ENCODE measurements at regions of chr3 and their contacts with region 1.

Region 1: GRCh38 chr3:9792405-9793160 is at the starts of genes ARPC4 and TADA3:
- DNase-seq: peak; percentile 90
- ATAC-seq: peak; percentile 93
- H3K4me3 ChIP-seq: peak within 1 kb of the TSS; percentile 72 to 93 (median 93)
- H3K27ac ChIP-seq: peak within 1 kb of the TSS; percentile 97
- H3K4me1 ChIP-seq: peaks cover 28% of the 10 kb centered on the region
- H3K27me3 ChIP-seq: peaks cover 0 to 5% of the 10 kb centered on the region in 2 experiments; a peak in 1 of 5 replicates
- CTCF ChIP-seq: no peak
- EP300 ChIP-seq: no peak
- POLR2A ChIP-seq: peak; percentile 52
- RAD21 ChIP-seq: peak; percentile 30; the same call in 1 of the 2 replicates
- total RNA-seq, gene ARPC4: 73.9 and 83.6 TPM in 2 replicates
- total RNA-seq, gene TADA3: 37.1 and 43.3 TPM in 2 replicates

Region 2: DNA sequence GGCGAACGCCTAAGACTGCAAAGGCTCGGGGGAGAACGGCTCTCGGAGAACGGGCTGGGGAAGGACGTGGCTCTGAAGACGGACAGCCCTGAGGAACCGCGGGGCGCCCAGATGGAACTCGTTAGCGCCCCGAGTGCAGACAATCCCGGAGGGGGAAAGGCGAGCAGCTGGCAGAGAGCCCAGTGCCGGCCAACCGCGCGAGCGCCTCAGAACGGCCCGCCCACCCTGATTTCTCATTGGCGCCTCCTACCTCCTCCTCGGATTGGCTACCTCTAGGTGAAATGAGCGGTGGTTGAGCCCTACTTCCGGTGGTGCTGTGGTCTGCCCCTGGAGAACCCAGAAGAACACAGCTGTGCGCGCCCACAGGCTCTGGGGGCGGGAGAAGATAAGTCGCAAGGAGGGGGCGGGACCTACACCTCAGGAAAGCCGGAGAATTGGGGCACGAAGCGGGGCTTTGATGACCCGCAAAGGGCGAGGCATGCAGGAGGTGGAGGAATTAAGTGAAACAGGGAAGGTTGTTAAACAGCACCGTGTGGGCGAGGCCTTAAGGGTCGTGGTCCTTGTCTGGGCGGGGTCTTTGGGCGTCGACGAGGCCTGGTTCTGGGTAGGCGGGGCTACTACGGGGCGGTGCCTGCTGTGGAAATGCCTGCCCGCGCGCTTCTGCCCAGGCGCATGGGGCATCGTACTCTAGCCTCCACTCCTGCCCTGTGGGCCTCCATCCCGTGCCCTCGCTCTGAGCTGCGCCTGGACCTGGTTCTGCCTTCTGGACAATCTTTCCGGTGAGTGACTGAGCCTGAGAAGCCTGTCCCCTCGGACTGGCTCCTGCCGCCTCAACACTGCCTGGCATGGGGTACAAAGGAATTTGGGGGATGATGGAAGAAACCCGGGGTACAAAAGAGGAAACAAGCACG is 42.7 kb before region 1 on chr3 and contains the start of gene OGG1:
- CTCF ChIA-PET with region 1: no interaction called
- POLR2A ChIA-PET with region 1: interaction called, 30 read pairs
- in situ Hi-C with region 1: no loop called
- intact Hi-C with region 1: no loop called
- DNase-seq: peak; percentile 96
- ATAC-seq: peak; percentile 95
- H3K4me3 ChIP-seq: peak within 1 kb of the TSS; percentile 83 to 93 (median 89)
- H3K27ac ChIP-seq: peak within 1 kb of the TSS; percentile 72
- H3K4me1 ChIP-seq: peaks cover 19% of the 10 kb centered on the region
- H3K27me3 ChIP-seq: no peaks in the 10 kb centered on the region
- CTCF ChIP-seq: peak; percentile 33
- EP300 ChIP-seq: peak in 1 of 2 experiments; percentile 6; a peak in 2 of 4 replicates
- POLR2A ChIP-seq: peak; percentile 62 to 73
- RAD21 ChIP-seq: no peak
- total RNA-seq, gene OGG1: 23.8 and 28.7 TPM in 2 replicates

Region 3: GRCh38 chr3:9808345-9809037 is 15.9 kb after region 1 on chr3:
- CTCF ChIA-PET with region 1: no interaction called
- POLR2A ChIA-PET with region 1: interaction called, 13 read pairs
- in situ Hi-C with region 1: no loop called
- intact Hi-C with region 1: no loop called
- DNase-seq: peak; percentile 31
- ATAC-seq: peak; percentile 88
- H3K4me3 ChIP-seq: no peak overlapping the region
- H3K27ac ChIP-seq: no peak overlapping the region
- H3K4me1 ChIP-seq: no peaks in the 10 kb centered on the region
- H3K27me3 ChIP-seq: no peaks in the 10 kb centered on the region; a peak in 1 of 5 replicates
- CTCF ChIP-seq: peak; percentile 48
- EP300 ChIP-seq: no peak
- POLR2A ChIP-seq: no peak
- RAD21 ChIP-seq: 0 out of 2 replicates have a peak, but pooled peaks have one; percentile 34

Region 4: DNA sequence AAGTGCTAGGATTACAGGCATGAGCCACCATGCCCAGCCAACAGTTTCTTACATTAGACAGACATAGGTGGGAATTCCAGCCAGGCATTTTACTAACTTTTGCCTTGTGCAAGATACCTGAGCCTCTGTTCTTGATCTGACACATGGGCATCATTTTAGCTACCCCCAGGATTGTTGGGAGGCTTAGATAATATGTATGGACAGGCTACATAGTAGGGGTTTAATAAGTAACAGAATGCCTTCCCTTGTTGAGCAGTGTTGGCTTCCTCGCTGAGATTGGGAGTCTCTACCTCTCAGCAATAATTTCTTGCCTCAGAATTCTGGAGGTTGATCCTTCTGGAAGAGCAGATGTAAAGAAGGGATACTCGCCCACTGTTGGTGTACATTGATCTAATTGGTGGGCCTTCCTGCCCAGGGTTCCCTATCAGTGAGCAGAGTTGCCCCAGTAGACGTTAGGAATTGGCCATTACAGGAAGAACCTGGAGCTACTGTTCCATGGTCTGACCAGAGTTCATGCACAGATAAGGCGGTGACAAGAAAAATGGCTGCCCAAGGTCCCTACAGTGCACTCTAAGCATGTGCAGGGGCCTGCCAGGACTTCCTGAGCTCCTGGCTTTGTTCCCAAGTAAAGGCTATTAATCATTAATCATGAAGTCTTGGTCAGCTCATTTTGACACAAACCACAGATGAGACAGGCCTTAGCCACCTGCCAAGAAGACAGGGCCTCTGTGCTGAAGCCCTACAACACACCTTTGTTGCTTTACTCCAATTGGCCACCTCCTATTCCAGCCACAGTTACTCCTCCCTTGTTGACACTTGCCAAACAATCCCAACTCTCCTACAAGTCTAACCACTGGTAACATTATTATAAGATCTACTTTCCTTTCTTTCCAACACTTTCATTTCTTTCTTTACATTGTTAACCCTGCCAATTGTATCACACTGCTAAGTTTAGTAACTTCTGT is 105.1 kb after region 1 on chr3:
- CTCF ChIA-PET with region 1: no interaction called
- POLR2A ChIA-PET with region 1: interaction called, 10 read pairs
- in situ Hi-C with region 1: no loop called
- intact Hi-C with region 1: no loop called
- DNase-seq: peak; percentile 98
- ATAC-seq: peak; percentile 80
- H3K4me3 ChIP-seq: peak overlapping the region in 2 of 3 experiments; percentile 34 to 67; a peak in 3 of 6 replicates
- H3K27ac ChIP-seq: peak overlapping the region; percentile 100
- H3K4me1 ChIP-seq: peaks cover 79% of the 10 kb centered on the region
- H3K27me3 ChIP-seq: no peaks in the 10 kb centered on the region; a peak in 1 of 5 replicates
- CTCF ChIP-seq: no peak
- EP300 ChIP-seq: peak in 1 of 2 experiments; percentile 48; a peak in 3 of 4 replicates
- POLR2A ChIP-seq: peak; percentile 66 to 88
- RAD21 ChIP-seq: no peak